Mucosa of descending colon (tissue), 3 donors: ENCODE measurements at regions of chr2 and their contacts with region 1.

Region 1: GRCh38 chr2:68925295-68925896 is 27.3 kb downstream of the GKN2 start:
- DNase-seq: peak in 1 of 3 donors; percentile 71
- ATAC-seq: peak; percentile 72
- H3K4me3 ChIP-seq: no peak overlapping the region
- H3K4me1 ChIP-seq: no peaks in the 10 kb centered on the region
- CTCF ChIP-seq: peak; percentile 70

Region 2: DNA sequence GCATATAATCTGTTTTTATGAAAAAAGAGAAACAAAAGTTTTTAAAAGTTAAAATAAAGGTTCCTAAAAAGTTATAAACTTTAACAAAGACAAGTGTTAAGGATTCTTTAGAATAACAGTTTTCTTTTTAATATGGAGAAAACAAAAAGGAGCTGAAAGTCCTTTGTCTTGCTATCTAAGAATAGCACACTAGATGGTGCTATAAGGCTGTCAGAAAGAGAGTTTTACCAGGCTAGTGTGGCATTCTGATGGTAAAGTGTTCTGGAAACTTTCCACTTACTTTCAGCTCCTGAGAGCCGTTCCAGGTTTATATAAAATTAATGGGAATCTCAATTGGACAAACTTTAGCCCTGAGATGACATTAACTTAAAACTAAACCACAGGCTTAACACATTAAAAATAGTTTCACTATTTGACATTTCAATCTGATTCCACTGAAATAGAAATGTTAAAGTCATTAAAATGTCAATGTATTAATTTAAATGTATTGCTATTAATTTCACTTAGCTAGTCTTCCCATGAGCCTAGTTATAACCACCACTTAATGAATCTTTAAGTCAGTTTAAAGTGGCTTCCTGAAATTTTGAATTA is 462.0 kb before region 1 on chr2:
- intact Hi-C with region 1: loop called in 1 of 2 experiments (anchors 5 kb)
- DNase-seq: no peak
- ATAC-seq: no peak
- H3K4me3 ChIP-seq: no peak overlapping the region
- H3K4me1 ChIP-seq: peaks cover 18% of the 10 kb centered on the region
- CTCF ChIP-seq: peak; percentile 56

Region 3: DNA sequence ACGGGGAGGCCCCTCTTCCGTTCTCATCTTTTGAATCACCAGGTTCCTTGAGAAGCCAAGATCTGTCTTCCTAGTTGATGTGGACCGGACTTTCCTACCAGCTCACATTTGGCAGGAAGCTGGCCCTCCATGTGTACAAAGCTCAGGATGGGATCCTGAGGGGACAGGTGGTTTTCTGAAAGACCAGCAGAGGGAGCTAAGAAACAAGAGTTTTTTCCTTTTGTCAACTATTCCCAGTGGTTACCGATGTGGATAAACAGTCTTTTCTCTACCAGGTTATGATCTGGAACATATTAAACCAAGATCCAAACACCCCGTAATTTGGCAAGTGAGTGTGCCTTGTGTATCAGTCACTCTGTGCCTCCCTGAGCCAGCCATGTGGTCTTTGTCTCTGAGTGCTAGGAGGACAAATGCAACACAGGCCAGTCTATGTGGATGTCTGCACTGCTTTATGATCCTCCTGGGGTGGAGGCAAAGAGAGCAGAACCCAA is 215.9 kb before region 1 on chr2:
- intact Hi-C with region 1: loop called (anchors 1 to 10 kb)
- DNase-seq: no peak
- ATAC-seq: peak; percentile 72
- H3K4me3 ChIP-seq: no peak overlapping the region
- H3K4me1 ChIP-seq: peaks cover 3% of the 10 kb centered on the region
- CTCF ChIP-seq: peak; percentile 58

Region 4: DNA sequence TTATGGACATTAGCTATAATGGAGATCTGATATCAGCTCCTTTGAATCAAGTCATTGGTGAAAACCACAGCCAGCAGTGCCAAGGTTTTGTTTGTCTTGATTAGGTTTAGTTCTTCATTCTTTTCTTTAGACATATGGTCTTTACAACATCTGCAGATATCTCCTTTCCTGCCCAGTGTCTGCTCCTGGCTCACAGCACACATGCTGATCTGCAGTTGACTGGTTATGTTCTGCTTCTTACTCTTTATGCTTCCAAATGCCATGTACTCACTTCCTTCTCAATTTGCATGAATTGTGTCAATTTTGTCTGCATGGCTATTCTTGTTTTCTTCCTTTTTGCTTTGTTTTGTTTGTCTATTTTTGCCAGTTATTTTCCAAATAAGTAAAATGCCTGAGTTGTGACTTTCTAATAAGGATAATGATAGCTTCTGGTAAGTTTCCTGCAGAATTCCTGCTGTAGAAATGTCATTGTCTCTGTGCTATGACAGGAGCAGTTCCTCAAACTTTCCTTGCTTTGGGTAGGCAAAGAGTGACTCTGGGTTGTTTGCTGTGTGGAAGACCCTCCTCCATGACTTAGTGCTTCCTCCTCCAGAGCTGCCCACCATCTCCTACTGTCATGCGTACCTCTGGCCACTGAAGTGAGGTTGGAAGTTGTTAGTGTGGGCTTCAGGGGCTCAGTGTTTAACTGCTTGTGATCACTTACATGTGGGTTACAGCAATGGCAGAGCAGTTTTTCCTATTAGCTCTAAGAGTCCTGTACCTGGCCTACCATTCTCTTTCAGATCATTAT is 182.6 kb before region 1 on chr2:
- intact Hi-C with region 1: loop called in 1 of 2 experiments (anchors 10 kb)
- DNase-seq: peak in 1 of 3 donors; percentile 7
- ATAC-seq: peak; percentile 29
- H3K4me3 ChIP-seq: no peak overlapping the region
- H3K4me1 ChIP-seq: no peaks in the 10 kb centered on the region
- CTCF ChIP-seq: no peak